Activated CD4-positive, alpha-beta T cell treated with anti-CD3 and anti-CD28 coated beads, Interleukin-2, amount 10 ng/mL, durations not matched to agents 24 days and 14 days (primary cell): ENCODE measurements at regions of chr19 and their contacts with region 1.

Region 1: DNA sequence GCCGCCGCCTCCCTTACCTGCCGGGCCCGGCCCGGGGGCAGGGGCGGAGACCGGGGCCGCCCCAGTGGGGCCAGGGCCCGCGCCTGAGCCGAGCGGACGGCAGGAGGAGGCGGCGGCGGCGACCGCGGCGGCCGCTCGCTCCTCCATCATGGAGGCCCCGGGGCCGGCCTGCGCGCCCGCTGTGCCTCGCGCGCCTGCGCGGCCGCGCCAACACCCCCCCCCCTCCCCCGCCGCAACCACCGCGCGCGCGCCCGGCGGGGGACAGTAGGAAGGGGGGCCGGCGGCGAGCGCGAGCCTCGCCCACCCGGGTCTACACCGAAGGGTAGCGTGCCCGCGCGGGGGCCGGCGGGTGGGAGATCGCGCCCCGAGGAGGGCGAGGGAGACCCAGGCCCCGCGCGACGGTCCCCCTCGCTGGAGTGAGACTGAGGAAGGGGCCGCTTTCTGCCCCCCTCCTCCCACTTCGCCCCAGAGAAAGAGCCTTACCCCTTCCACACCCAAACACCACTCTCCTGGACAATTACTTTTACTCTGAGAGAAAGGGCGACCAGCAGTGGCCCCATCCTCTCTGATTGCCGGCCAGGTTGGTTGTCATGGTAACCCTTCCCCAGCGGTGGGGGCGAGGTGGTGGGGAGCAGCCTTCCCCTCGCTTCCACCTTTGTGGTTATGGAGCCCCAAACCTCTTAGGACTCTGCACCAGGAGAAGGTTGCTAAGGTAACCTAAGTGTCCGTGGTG is at the start of gene STRN4:
- DNase-seq: peak; percentile 87
- H3K4me3 Mint-ChIP-seq: peak within 1 kb of the TSS; percentile 93
- H3K27ac Mint-ChIP-seq: peak within 1 kb of the TSS; percentile 91
- H3K4me1 Mint-ChIP-seq: peaks cover 34% of the 10 kb centered on the region
- H3K27me3 Mint-ChIP-seq: no peaks in the 10 kb centered on the region
- total RNA-seq, gene STRN4: 101 and 107 TPM in 2 replicates

Region 2: DNA sequence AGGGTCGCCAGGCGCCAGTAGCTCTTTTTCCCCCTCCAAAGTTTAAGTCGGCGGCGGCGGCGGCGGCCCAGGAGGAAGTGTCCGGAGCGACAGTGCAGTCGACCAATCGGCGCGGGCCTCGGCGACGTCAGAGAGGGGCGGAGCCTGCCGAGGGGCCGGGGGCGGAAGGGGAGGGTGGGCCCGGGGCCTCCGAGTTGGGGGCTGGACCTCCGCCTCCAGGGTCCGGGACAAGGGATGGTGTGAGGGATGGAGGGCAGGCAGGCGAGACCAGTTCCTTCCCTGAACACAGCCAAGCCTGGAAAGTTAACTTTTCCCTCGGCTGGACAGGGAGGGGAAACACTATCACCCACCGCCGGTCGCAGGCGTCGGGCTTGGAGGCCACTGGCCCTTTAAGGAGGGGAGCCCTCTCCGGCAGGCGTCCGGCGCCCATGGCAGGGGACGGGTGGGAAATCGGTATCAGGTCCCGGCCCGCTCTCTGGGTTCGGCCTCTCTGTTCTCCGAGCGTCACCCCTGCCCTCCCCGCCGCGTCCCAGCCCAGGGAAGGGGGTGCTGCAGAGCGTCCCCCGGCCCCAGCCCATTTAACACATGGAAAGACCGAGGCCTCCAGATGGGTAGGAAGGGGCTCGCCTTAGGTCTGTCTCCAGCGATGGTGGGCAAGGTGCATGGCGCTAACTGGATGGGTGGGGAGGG is 29.3 kb before region 1 on chr19 and contains the start of gene PRKD2:
- intact Hi-C with region 1: loop called (anchors 5 kb)
- DNase-seq: peak; percentile 98
- H3K4me3 Mint-ChIP-seq: peak within 1 kb of the TSS; percentile 97
- H3K27ac Mint-ChIP-seq: peak within 1 kb of the TSS; percentile 94
- H3K4me1 Mint-ChIP-seq: peaks cover 51% of the 10 kb centered on the region
- H3K27me3 Mint-ChIP-seq: no peaks in the 10 kb centered on the region
- total RNA-seq, gene PRKD2: 89.1 and 90.5 TPM in 2 replicates